Activated T-helper 2 cell treated with anti-CD3 and anti-CD28 coated beads, Interferon-gamma antibody, Interleukin-2, Interleukin-4, amounts not matched to agents 10 μg/mL and 5 μg/mL and 100 μg/mL, durations not matched to agents 14 hours and 24 hours and 36 hours (primary cell): ENCODE measurements at regions of chr12 and their contacts with region 1.

Region 1: GRCh38 chr12:102484428-102484958 is 4.1 kb upstream of the IGF1 start:
- DNase-seq: peak; percentile 53
- H3K4me3 Mint-ChIP-seq: peak overlapping the region; percentile 71
- H3K27ac Mint-ChIP-seq: peak overlapping the region; percentile 96
- H3K4me1 Mint-ChIP-seq: peaks cover 36% of the 10 kb centered on the region
- H3K27me3 Mint-ChIP-seq: no peaks in the 10 kb centered on the region

Region 2: GRCh38 chr12:102119674-102120563 is 364.6 kb before region 1 on chr12 and contains the starts of genes NUP37 and PARPBP:
- intact Hi-C with region 1: loop called (anchors 2 kb)
- DNase-seq: peak; percentile 91
- H3K4me3 Mint-ChIP-seq: peak within 1 kb of the TSS; percentile 89
- H3K27ac Mint-ChIP-seq: peak within 1 kb of the TSS; percentile 77
- H3K4me1 Mint-ChIP-seq: peaks cover 36% of the 10 kb centered on the region
- H3K27me3 Mint-ChIP-seq: no peaks in the 10 kb centered on the region
- total RNA-seq, gene NUP37: 93.1 and 93.9 TPM in 2 replicates
- total RNA-seq, gene PARPBP: 27.0 and 27.4 TPM in 2 replicates

Region 3: DNA sequence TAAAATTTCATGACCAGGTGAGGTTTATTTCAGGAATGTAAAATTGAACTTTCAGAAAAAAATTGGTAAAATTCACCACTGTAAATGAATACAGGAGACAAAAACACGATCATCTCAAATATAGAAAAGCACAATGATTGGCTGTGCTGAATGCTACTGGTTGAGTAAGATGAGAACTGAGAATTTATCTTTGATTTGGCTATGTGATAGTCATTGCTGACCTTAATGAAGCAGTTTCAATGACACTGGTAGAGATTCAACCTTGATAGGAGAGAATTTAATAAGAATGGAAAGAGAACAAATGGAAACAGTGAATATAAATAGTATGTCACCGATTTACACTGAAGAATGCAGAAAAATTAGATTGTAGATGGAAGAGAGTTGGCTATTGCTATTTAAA is 280.5 kb before region 1 on chr12:
- intact Hi-C with region 1: loop called (anchors 1 kb)
- DNase-seq: no peak
- H3K4me3 Mint-ChIP-seq: no peak overlapping the region
- H3K27ac Mint-ChIP-seq: peak overlapping the region; percentile 86
- H3K4me1 Mint-ChIP-seq: peaks cover 44% of the 10 kb centered on the region
- H3K27me3 Mint-ChIP-seq: no peaks in the 10 kb centered on the region

Region 4: GRCh38 chr12:102374190-102374589 is 110.3 kb before region 1 on chr12:
- intact Hi-C with region 1: no loop called
- DNase-seq: no peak
- H3K4me3 Mint-ChIP-seq: no peak overlapping the region
- H3K27ac Mint-ChIP-seq: no peak overlapping the region
- H3K4me1 Mint-ChIP-seq: peaks cover 4% of the 10 kb centered on the region
- H3K27me3 Mint-ChIP-seq: no peaks in the 10 kb centered on the region

Region 5: DNA sequence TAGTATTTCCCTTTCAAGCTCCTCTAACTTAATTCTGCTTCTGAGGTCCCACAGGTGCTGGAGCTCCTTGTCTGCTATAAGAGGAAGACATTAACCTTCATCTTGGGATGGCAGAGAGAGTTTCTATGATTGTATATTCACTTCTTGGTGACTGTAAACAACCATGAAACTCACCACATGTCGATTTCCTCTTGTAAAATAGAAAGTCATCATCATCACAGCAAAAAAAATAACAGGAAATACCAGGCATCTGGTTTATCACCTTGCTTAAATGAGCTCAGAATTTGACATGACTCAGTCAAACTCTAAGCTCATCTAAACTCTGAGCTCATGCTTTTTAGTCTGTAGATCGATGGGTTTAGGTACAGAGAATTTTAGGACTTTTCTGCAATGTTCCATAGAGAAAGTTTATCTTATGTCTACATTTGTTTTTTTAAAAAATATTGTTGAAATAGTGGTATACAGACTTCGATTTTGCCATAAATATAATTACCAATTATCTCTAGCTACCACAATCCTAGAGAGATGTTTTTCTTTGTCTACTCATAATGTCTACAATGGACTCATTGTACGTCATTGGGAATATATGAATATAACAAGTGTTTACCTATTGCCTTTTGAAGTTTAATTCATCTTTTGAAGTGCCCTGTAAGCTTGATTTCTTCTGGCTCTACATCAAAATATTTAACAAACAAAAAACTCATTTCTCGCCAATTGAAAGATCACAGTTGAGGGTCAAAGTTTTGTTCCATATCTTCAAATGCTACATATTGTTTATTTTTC is 62.5 kb before region 1 on chr12:
- intact Hi-C with region 1: loop called (anchors 1 kb)
- DNase-seq: no peak
- H3K4me3 Mint-ChIP-seq: no peak overlapping the region
- H3K27ac Mint-ChIP-seq: peak overlapping the region; percentile 60
- H3K4me1 Mint-ChIP-seq: peaks cover 11% of the 10 kb centered on the region
- H3K27me3 Mint-ChIP-seq: peaks cover 10% of the 10 kb centered on the region

Region 6: DNA sequence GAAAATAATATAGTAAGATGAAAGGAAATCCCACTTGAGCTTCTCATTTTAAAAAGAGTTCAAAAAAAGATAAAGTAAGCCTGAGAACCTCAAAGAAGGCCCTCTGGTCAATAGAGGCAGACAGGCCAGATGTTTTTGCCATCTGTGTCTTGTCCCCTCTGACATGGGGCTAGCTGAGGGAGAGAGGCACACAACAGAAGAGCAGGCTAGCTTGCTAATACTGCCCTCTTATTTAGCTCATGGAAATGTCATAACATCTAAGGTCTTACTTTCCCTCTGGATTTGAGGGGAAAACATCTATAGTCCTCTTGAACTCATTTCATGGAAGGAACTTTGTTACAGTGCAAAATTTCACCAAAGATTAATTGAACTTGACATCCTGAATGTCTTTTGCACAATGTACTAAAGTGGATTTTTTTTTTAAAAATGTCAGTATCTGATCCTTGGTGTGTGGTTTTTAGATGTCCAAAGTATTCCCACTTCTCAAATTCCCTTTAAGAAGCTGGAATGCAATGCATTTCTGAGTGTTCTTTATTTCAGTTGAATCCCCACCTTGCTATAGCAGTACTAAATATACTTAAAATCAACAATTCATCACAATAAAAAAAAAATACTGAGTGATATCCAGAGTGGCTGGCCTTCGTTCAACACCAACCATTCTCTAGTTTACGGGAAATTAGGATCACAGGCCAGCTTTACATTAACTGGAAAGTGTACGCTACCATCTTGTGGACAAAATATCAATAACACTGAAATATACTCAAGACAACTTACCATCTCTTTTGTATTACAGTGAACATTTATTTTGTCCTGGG is 255.9 kb after region 1 on chr12:
- intact Hi-C with region 1: loop called (anchors 10 kb)
- DNase-seq: no peak
- H3K4me3 Mint-ChIP-seq: no peak overlapping the region
- H3K27ac Mint-ChIP-seq: no peak overlapping the region
- H3K4me1 Mint-ChIP-seq: peaks cover under 1% of the 10 kb centered on the region
- H3K27me3 Mint-ChIP-seq: peaks cover 1% of the 10 kb centered on the region